Uterus (tissue), 4 donors: ENCODE measurements at regions of chr22 and their contacts with region 1.

Region 1: GRCh38 chr22:42169055-42169469 is 38.5 kb upstream of the CYP2D6 start:
- DNase-seq: peak; percentile 67 to 74
- H3K4me3 ChIP-seq: no peak overlapping the region
- H3K27ac ChIP-seq: no peak overlapping the region
- H3K4me1 ChIP-seq: peaks cover 0 to 4% of the 10 kb centered on the region in 2 donors
- H3K27me3 ChIP-seq: no peaks in the 10 kb centered on the region
- CTCF ChIP-seq: peak; percentile 85 to 93 (median 90)
- POLR2A ChIP-seq: no peak

Region 2: GRCh38 chr22:42437488-42438292 is 268.6 kb after region 1 on chr22:
- intact Hi-C with region 1: loop called (anchors 2 kb)
- DNase-seq: peak; percentile 70 to 75
- H3K4me3 ChIP-seq: peak overlapping the region; percentile 24 to 25
- H3K27ac ChIP-seq: no peak overlapping the region
- H3K4me1 ChIP-seq: peaks cover 0 to 6% of the 10 kb centered on the region in 2 donors
- H3K27me3 ChIP-seq: no peaks in the 10 kb centered on the region
- CTCF ChIP-seq: peak; percentile 96 to 99 (median 96)
- POLR2A ChIP-seq: no peak